Ovary (tissue), 10 donors: ENCODE measurements at regions of chr14 and their contacts with region 1.

Region 1: GRCh38 chr14:64937821-64938193 is 4.7 kb downstream of the GPX2 start:
- DNase-seq: no peak
- H3K4me3 ChIP-seq: no peak overlapping the region
- H3K27ac ChIP-seq: no peak overlapping the region
- H3K4me1 ChIP-seq: peaks cover 16% of the 10 kb centered on the region
- H3K27me3 ChIP-seq: no peaks in the 10 kb centered on the region
- CTCF ChIP-seq: no peak
- EP300 ChIP-seq: no peak
- POLR2A ChIP-seq: no peak

Region 2: GRCh38 chr14:64671591-64671990 is 266.2 kb before region 1 on chr14:
- intact Hi-C with region 1: loop called in 1 of 4 experiments (anchors 10 kb)
- DNase-seq: no peak
- H3K4me3 ChIP-seq: no peak overlapping the region
- H3K27ac ChIP-seq: no peak overlapping the region
- H3K4me1 ChIP-seq: no peaks in the 10 kb centered on the region
- H3K27me3 ChIP-seq: no peaks in the 10 kb centered on the region
- CTCF ChIP-seq: peak; percentile 67 to 82 (median 79)
- EP300 ChIP-seq: no peak
- POLR2A ChIP-seq: no peak

Region 3: DNA sequence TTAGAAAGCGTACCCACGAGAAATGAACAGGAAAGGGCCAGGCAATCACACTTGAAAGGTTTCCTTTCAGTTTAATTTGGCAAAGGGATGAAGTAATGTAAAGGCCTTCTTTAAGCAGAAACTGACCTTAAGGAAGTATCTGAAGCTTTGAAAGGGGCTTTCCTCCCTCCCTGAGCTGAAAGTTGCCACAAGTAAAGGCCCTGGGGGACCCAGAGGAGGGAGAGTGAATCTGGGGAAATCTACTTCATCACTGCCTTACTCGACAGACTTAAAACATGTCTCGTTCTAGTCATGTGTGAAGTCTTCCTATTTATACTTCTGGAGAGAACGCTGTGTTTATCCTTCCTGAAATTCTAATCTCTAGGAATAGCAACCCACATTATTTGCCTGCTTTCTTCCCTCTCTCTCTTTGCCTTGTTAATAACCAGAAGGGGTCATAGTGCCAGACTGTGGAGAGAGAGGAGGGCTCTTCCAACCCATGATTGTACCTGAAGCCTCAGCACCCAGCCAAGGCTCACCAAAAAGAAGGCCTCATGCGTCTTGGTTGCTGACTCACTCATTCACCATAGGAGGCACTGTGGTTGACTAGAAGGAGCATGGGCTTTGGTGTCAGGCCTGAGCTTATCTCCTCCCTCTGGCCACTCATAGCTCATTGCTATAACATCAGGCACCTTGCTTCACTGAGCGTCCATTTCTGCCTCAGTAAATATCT is 14.9 kb after region 1 on chr14:
- intact Hi-C with region 1: no loop called
- DNase-seq: no peak
- H3K4me3 ChIP-seq: no peak overlapping the region
- H3K27ac ChIP-seq: no peak overlapping the region
- H3K4me1 ChIP-seq: no peaks in the 10 kb centered on the region
- H3K27me3 ChIP-seq: no peaks in the 10 kb centered on the region
- CTCF ChIP-seq: no peak
- EP300 ChIP-seq: no peak
- POLR2A ChIP-seq: no peak